Activated T-helper 2 cell treated with anti-CD3 and anti-CD28 coated beads, Interferon-gamma antibody, Interleukin-2, Interleukin-4, amounts not matched to agents 10 μg/mL and 5 μg/mL and 100 μg/mL, durations not matched to agents 14 hours and 24 hours and 36 hours (primary cell): ENCODE measurements at regions of chr18 and their contacts with region 1.

Region 1: DNA sequence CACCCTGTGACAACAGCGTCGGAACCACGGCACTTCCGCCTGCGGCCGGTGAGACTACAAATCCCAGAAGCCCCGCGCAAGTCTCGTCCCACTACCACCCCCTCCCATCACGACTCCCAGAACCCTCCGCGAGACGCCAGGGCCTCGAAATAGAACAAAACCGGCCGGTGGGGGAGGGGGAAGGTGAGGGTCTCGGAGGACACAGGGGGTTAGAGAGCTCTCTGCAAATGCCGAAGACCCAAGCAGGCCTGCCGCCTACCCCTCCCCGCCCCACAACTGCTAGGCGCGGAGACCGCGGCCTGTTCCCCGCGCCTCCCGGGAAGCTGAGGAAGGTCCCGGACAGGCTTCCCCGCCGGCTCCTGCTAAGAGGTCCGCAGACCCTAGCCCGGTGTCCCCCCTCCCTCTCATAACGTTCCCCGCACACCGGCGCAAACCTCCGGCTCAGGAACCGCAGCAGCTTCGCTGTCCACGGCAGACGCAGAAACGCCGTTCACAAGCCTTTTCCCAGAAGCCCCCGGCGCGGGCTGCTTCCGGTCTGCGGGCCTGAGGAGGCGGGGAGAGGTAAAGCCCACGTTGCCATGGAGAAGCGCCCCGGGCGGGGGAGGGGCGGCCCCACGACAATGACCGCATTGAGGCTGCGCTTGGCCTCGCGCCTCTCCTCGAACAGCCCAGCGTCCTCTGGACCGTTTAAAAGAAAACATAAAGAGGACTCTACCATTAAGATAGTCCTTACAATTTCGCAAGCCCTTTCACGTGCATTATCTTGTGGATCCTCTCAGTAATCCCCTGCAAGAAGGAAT is at the start of gene ZNF24:
- DNase-seq: peak; percentile 87
- H3K4me3 Mint-ChIP-seq: peak within 1 kb of the TSS; percentile 94
- H3K27ac Mint-ChIP-seq: peak within 1 kb of the TSS; percentile 83
- H3K4me1 Mint-ChIP-seq: peaks cover 24% of the 10 kb centered on the region
- H3K27me3 Mint-ChIP-seq: no peaks in the 10 kb centered on the region
- total RNA-seq, gene ZNF24: 46.0 and 51.5 TPM in 2 replicates

Region 2: DNA sequence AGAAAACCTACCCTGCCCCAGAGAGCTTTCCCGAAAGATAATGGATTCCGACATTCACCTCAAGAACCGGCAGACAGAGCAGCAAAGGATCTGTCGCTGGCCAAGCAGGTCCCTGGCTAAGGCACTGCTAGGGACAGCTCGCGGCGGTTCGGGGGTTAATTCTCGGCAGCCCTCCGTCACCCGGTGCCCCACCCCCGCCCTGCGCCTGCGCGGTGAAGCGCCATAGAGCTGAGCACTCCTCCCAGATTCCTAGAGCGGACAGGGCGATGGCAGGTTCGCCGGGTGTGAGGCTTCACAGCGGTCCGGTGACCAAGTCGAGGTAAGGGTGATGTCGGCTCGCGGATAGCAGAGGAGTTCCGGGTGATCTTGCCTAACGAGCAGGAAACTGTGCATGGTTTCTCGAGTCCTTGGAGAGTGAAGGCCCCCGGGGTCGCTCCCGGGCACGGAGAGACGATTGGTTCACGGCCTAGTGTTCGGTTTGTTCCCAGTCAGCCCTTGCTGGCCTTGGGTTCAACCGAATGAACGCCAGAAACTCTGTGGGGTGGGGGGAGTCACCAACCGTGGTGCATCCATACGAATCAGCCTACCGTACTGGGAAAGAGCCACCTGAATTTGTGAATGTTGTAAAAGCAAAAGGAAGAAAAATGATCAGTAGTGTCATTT is 53.9 kb before region 1 on chr18 and contains the start of gene ZSCAN30:
- intact Hi-C with region 1: loop called (anchors 1 kb)
- DNase-seq: peak; percentile 93
- H3K4me3 Mint-ChIP-seq: peak within 1 kb of the TSS; percentile 98
- H3K27ac Mint-ChIP-seq: peak within 1 kb of the TSS; percentile 94
- H3K4me1 Mint-ChIP-seq: peaks cover 29% of the 10 kb centered on the region
- H3K27me3 Mint-ChIP-seq: no peaks in the 10 kb centered on the region
- total RNA-seq, gene ZSCAN30: 15.5 and 19.9 TPM in 2 replicates

Region 3: GRCh38 chr18:35376742-35377695 is 32.9 kb after region 1 on chr18 and contains the start of gene ZNF396:
- intact Hi-C with region 1: loop called (anchors 2 kb)
- DNase-seq: peak; percentile 58
- H3K4me3 Mint-ChIP-seq: peak within 1 kb of the TSS; percentile 78
- H3K27ac Mint-ChIP-seq: no peak within 1 kb of the TSS
- H3K4me1 Mint-ChIP-seq: peaks cover 8% of the 10 kb centered on the region
- H3K27me3 Mint-ChIP-seq: peaks cover 22% of the 10 kb centered on the region
- total RNA-seq, gene ZNF396: 0.25 and 0.32 TPM in 2 replicates

Region 4: GRCh38 chr18:35688757-35689156 is 344.6 kb after region 1 on chr18:
- intact Hi-C with region 1: no loop called
- DNase-seq: no peak
- H3K4me3 Mint-ChIP-seq: no peak overlapping the region
- H3K27ac Mint-ChIP-seq: no peak overlapping the region
- H3K4me1 Mint-ChIP-seq: no peaks in the 10 kb centered on the region
- H3K27me3 Mint-ChIP-seq: no peaks in the 10 kb centered on the region